Activated CD8-positive, alpha-beta T cell treated with anti-CD3 and anti-CD28 coated beads, Interleukin-2, amount 10 ng/mL, durations not matched to agents 7 days and 5 days (primary cell): ENCODE measurements at regions of chr14 and their contacts with region 1.

Region 1: DNA sequence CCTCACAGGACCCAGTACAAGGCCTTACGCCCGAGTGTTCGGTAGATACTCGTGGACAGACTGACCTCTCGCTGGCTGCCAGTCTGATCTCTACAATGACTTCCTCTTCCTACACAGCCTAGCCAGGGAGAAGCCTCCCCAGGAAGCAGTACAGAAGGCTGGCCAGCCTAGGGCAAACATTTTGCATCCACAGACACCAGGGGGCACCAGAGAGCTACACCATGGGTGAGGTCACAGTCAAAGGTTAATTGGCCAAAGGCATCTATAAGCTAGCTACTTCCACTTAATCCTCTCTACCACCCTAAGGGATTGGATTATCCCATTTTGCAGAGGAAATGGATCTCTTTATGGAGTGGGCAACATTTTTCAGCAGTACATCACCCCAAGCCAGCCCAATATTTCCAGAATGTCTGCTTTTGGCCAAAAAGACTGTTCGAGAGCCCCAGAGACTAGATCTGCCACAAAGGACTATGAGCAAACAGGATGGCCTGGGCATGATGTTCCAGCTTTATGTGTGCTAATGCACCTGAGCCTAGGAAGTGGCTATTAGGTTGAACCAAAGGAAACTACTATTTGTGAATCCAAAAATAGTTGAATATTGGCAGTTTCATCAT is 14.6 kb upstream of the PNMA1 start:
- DNase-seq: peak; percentile 91
- ATAC-seq: peak; percentile 93
- H3K4me3 Mint-ChIP-seq: no peak overlapping the region
- H3K27ac Mint-ChIP-seq: peak overlapping the region; percentile 74
- H3K4me1 Mint-ChIP-seq: peaks cover 43% of the 10 kb centered on the region
- H3K27me3 Mint-ChIP-seq: no peaks in the 10 kb centered on the region

Region 2: GRCh38 chr14:73713803-73714655 is 14.8 kb before region 1 on chr14 and contains the start of gene PNMA1:
- CTCF ChIA-PET with region 1: interaction called, 17 read pairs
- POLR2A ChIA-PET with region 1: interaction called, 4 read pairs
- DNase-seq: peak; percentile 90
- ATAC-seq: peak; percentile 79
- H3K4me3 Mint-ChIP-seq: peak within 1 kb of the TSS; percentile 93
- H3K27ac Mint-ChIP-seq: peak within 1 kb of the TSS; percentile 96
- H3K4me1 Mint-ChIP-seq: peaks cover 23% of the 10 kb centered on the region
- H3K27me3 Mint-ChIP-seq: no peaks in the 10 kb centered on the region
- total RNA-seq, gene PNMA1: 24.4 to 25.6 TPM

Region 3: DNA sequence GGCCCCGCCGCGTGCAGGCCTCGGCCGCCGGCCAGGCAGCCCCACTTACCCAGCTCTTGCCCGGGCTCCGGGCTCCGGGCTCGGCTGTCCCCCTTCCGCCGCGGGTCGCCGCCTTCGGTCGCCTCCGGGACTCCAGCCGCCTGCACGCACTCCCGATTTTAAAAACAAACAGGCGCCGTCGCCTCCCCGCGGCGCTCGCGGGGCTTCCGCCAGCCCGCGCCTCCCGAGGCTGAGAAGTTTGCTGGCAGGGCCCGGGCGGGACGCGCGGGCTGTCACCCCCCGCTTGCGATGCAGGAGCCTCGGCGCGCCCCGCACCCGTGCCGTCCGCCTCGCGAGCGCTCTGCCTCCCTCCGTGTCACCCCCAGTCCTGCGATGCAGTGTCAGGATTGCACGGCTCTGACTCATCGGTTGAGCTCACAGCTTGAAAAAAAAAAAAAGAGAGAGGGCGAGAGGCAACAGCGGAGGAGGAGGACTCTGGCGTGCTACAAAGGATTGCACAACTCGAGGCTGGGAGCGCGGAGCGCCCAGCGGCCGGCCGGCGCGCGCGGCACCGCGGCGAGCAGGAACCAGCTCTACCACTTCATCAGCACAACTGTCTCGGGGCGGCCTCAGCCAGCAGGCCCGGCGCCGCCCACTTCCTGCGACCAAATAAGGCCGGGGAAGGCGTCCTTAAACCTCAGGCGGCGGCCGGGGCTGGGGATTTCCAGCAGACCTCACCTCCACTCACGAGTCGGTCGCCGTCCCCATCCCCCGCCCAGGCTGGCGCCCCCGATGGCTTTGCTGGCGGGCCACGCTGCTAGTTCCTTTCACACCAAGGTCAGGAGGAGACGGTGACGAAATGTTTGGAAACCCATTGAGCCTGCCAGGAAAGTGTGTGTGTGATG is 31.1 kb after region 1 on chr14:
- CTCF ChIA-PET with region 1: interaction called, 186 read pairs
- POLR2A ChIA-PET with region 1: interaction called, 11 read pairs
- DNase-seq: peak; percentile 96
- ATAC-seq: peak; percentile 86
- H3K4me3 Mint-ChIP-seq: peak overlapping the region; percentile 91
- H3K27ac Mint-ChIP-seq: peak overlapping the region; percentile 95
- H3K4me1 Mint-ChIP-seq: peaks cover 74% of the 10 kb centered on the region
- H3K27me3 Mint-ChIP-seq: no peaks in the 10 kb centered on the region

Region 4: GRCh38 chr14:73777401-73777800 is 48.6 kb after region 1 on chr14:
- CTCF ChIA-PET with region 1: interaction called, 17 read pairs
- POLR2A ChIA-PET with region 1: no interaction called
- DNase-seq: no peak
- ATAC-seq: peak; percentile 16
- H3K4me3 Mint-ChIP-seq: no peak overlapping the region
- H3K27ac Mint-ChIP-seq: no peak overlapping the region
- H3K4me1 Mint-ChIP-seq: peaks cover 55% of the 10 kb centered on the region
- H3K27me3 Mint-ChIP-seq: no peaks in the 10 kb centered on the region

Region 5: GRCh38 chr14:73825551-73826188 is 96.8 kb after region 1 on chr14:
- CTCF ChIA-PET with region 1: interaction called, 103 read pairs
- POLR2A ChIA-PET with region 1: interaction called, 3 read pairs
- DNase-seq: peak; percentile 77
- ATAC-seq: peak; percentile 91
- H3K4me3 Mint-ChIP-seq: no peak overlapping the region
- H3K27ac Mint-ChIP-seq: no peak overlapping the region
- H3K4me1 Mint-ChIP-seq: peaks cover 21% of the 10 kb centered on the region
- H3K27me3 Mint-ChIP-seq: peaks cover 3% of the 10 kb centered on the region

Region 6: DNA sequence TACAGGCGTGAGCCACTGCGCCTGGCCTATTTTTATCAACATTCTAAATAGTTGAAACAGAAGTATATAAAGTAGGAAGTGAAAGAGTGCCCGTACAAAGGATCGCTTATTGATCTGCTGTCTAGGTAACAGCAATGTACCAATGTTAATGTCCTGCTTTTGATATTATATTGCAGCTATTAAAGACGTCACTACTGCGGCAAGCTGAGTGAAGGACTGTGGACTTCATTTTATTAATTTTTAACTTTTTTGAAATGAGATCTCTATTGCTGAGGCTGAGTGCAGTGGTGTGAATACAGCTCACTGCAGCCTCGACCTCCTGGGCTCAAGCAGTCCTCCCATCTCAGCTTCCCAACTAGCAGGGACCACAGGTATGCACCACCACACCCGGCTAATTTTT is 133.7 kb after region 1 on chr14:
- CTCF ChIA-PET with region 1: interaction called, 10 read pairs
- POLR2A ChIA-PET with region 1: no interaction called
- DNase-seq: no peak
- ATAC-seq: no peak
- H3K4me3 Mint-ChIP-seq: no peak overlapping the region
- H3K27ac Mint-ChIP-seq: no peak overlapping the region
- H3K4me1 Mint-ChIP-seq: no peaks in the 10 kb centered on the region
- H3K27me3 Mint-ChIP-seq: no peaks in the 10 kb centered on the region